Activated T-helper 1 cell treated with anti-CD3 and anti-CD28 coated beads, Interleukin-12 subunit alpha, Interleukin-12 subunit beta, Interleukin-2, Interleukin-4 antibody, amounts not matched to agents 30 ng/mL and 10 ng/mL and 1 ng/mL, durations not matched to agents 14 hours and 24 hours and 36 hours (primary cell): ENCODE measurements at regions of chr1 and their contacts with region 1.

Region 1: GRCh38 chr1:70685300-70686241 is 274.5 kb downstream of the CTH start:
- DNase-seq: peak; percentile 31
- H3K4me3 Mint-ChIP-seq: no peak overlapping the region
- H3K27ac Mint-ChIP-seq: no peak overlapping the region
- H3K4me1 Mint-ChIP-seq: no peaks in the 10 kb centered on the region
- H3K27me3 Mint-ChIP-seq: no peaks in the 10 kb centered on the region

Region 2: DNA sequence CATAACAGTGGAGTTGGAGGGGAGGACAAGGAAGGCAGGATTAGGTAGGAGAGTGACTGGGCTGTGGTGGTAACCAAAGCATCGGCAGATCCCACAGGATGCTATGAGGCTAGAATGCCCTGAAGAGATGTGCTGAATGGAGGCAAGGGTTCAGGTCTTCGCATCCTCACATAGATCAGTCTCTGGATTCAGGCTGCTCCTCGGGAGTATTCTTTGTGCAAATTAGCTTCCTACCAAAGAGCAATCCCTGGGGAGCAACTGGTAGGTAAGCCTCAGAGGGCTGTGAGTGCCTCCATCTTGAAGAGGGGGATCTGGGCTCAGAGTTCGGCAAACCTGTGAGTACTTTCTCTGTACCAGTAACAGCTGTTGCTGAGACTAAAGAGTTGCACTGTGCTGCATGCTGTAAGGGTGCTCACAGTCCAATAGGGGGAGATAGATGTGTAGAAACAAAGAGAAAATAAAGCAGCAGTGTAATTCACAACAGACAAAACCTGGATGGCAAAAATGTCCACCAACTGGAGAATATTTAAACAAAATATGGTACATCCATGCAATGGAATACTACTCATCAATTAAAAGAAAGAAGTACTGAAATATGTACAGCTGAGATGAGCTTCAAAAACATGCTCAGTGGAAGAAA is 1866.3 kb before region 1 on chr1:
- intact Hi-C with region 1: no loop called
- DNase-seq: no peak
- H3K4me3 Mint-ChIP-seq: no peak overlapping the region
- H3K27ac Mint-ChIP-seq: no peak overlapping the region
- H3K4me1 Mint-ChIP-seq: no peaks in the 10 kb centered on the region
- H3K27me3 Mint-ChIP-seq: no peaks in the 10 kb centered on the region

Region 3: DNA sequence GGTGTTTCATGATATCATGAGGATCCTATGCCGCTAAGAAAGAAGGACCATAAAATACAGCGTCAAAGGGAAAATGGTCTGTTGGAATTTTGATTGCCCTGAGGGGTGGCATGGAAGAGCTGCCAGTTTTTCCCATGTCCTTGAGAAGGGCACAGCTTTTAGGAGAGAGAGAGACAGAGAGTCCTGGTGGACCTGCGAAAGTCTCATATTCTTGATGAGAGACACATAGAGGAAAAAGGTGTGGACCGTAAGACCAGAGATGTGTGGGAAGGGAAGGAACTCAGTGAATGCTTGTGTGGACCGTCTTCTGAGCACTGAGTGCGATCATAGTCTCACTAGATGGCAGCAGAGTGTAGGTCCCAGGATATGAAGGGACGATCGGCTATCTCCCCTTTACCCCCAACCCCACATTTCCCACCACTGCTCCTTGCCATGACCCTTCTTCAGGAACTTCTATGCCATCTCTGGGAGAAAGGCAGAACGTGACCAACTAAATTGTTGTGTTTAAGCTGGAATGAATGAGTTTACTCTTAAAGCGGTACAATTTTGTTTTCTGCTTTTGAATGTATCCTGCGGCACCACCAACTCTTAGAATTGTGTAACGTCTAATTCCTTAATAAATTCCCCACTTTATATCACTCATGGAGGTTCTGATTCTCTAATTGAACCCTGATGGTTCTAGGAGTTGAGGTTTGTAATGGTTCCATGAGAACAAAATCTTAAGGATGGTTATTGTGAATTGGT is 156.8 kb before region 1 on chr1:
- intact Hi-C with region 1: loop called (anchors 10 kb)
- DNase-seq: no peak
- H3K4me3 Mint-ChIP-seq: no peak overlapping the region
- H3K27ac Mint-ChIP-seq: no peak overlapping the region
- H3K4me1 Mint-ChIP-seq: no peaks in the 10 kb centered on the region
- H3K27me3 Mint-ChIP-seq: peaks cover 5% of the 10 kb centered on the region

Region 4: GRCh38 chr1:70667494-70668170 is 17.9 kb before region 1 on chr1:
- intact Hi-C with region 1: no loop called
- DNase-seq: no peak
- H3K4me3 Mint-ChIP-seq: no peak overlapping the region
- H3K27ac Mint-ChIP-seq: no peak overlapping the region
- H3K4me1 Mint-ChIP-seq: no peaks in the 10 kb centered on the region
- H3K27me3 Mint-ChIP-seq: no peaks in the 10 kb centered on the region

Region 5: DNA sequence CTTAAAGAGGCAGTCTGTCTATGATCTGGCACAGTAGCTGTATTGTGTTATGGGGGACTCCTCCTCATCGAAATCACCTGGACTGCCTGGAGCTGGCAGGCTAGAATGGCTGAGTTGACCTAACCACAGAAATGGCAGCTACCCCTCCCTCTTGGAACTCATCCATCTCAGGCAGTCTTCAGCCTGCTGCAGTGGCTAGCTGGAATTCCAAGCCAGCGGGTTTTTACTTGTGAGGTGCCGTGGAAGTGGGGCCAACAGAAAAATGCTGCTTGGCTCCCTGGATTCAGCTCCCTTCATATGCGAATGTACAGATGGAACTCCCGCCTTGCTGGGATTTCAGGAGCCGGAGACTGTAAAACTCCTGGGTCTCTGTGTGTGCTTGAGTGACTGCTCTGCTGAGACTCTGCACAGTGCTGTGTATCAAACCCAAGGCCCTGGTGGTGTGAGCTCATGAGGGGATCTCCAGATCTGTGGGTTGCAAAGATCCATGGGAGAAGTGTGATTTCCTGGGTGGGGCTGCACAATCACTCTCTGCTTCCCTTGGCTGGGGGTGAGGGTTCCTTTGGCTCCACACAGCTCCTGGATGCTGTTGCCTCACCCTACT is 42.4 kb after region 1 on chr1:
- intact Hi-C with region 1: no loop called
- DNase-seq: no peak
- H3K4me3 Mint-ChIP-seq: no peak overlapping the region
- H3K27ac Mint-ChIP-seq: no peak overlapping the region
- H3K4me1 Mint-ChIP-seq: no peaks in the 10 kb centered on the region
- H3K27me3 Mint-ChIP-seq: no peaks in the 10 kb centered on the region

Region 6: DNA sequence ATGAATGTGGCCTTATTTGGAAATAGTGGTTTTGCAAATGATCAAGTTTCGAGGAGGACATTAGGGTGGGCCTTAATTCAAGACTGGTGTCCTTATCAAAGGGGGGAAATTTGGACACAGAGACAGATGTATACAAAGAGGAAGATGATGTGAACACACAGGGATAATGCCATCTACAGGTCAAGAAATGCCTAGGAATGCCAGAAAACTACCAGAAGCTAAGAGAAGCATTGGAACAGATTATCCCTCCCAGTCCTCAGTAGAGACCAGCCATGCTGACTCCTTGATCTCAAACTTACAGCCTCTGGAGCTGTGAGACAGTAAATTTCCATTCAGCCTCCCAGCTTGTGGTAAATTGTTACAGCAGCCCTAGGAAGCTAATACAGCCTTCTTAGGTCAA is 210.7 kb after region 1 on chr1:
- intact Hi-C with region 1: loop called (anchors 5 kb)
- DNase-seq: no peak
- H3K4me3 Mint-ChIP-seq: no peak overlapping the region
- H3K27ac Mint-ChIP-seq: no peak overlapping the region
- H3K4me1 Mint-ChIP-seq: peaks cover 16% of the 10 kb centered on the region
- H3K27me3 Mint-ChIP-seq: no peaks in the 10 kb centered on the region